ENCODE measurements at regions of chr15 and their contacts with region 1.

Region 1: GRCh38 chr15:34331809-34332208 is 5.8 kb downstream of the SLC12A6 start:
- DNase-seq: no peak
- ATAC-seq: no peak
- H3K4me3 ChIP-seq: no peak overlapping the region
- H3K27ac ChIP-seq: no peak overlapping the region
- H3K4me1 ChIP-seq: peaks cover 20% of the 10 kb centered on the region
- H3K27me3 ChIP-seq: no peaks in the 10 kb centered on the region
- CTCF ChIP-seq: no peak

Region 2: GRCh38 chr15:34241372-34242330 is 90.2 kb before region 1 on chr15:
- CTCF ChIA-PET with region 1: no interaction called
- POLR2A ChIA-PET with region 1: no interaction called
- in situ Hi-C with region 1: no loop called
- intact Hi-C with region 1: loop called (anchors 10 kb)
- DNase-seq: no peak
- ATAC-seq: peak; percentile 85
- H3K4me3 ChIP-seq: no peak overlapping the region
- H3K27ac ChIP-seq: no peak overlapping the region
- H3K4me1 ChIP-seq: no peaks in the 10 kb centered on the region
- H3K27me3 ChIP-seq: no peaks in the 10 kb centered on the region
- CTCF ChIP-seq: peak; percentile 79

Region 3: DNA sequence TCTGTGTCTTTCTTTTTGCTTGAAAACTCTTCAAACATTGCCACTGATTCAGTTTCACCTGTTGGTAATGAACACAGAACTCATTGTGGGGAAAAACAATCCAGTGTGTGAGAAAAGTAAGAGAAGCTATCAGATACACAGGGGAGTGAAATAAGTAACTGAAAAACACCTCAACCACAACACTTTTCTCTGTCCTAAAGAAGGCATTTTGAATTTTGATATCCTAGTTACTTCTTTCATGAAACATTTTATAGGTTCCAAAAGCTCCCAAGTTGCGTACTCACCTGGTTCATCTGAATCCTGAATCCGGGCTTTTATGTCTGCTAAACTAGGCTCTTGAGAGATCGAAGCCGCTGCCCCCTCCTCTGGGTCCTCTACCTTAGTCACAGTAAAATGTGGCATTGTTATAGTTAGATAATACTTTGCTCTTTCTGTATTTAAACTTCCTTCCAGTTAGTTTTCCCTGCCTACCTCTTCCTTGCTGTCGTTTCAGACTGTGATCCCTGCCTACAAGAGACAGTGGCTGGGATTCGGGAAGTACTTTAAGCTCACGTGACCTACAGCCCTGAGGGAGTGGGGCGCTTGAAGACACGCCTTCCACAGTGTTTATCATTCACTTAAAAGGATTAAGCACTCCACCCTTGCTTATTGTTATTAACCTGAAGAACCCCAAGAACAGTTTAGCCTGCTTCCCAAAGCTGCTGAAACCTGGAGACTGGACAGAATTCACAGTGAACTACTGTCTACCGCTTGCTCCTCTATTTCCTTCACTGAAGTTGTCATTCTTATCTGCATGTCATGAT is 13.3 kb before region 1 on chr15:
- CTCF ChIA-PET with region 1: interaction called, 4 read pairs
- POLR2A ChIA-PET with region 1: interaction called, 11 read pairs
- in situ Hi-C with region 1: no loop called
- intact Hi-C with region 1: no loop called
- DNase-seq: no peak
- ATAC-seq: peak; percentile 97
- H3K4me3 ChIP-seq: peak overlapping the region; percentile 50 to 75
- H3K27ac ChIP-seq: peak overlapping the region; percentile 78
- H3K4me1 ChIP-seq: peaks cover 17% of the 10 kb centered on the region; the same call in 1 of the 2 replicates
- H3K27me3 ChIP-seq: no peaks in the 10 kb centered on the region
- CTCF ChIP-seq: no peak

Measured in Panc1 (cell line).